ENCODE measurements at regions of chr4 and their contacts with region 1.

Region 1: GRCh38 chr4:3338321-3338838 is 45.6 kb downstream of the RGS12 start:
- DNase-seq: no peak
- H3K4me3 ChIP-seq: no peak overlapping the region
- H3K27ac ChIP-seq: peak overlapping the region; percentile 19
- H3K4me1 ChIP-seq: peaks cover 53% of the 10 kb centered on the region
- H3K27me3 ChIP-seq: no peaks in the 10 kb centered on the region
- CTCF ChIP-seq: no peak

Region 2: GRCh38 chr4:3322059-3322550 is 16.3 kb before region 1 on chr4:
- CTCF ChIA-PET with region 1: interaction called, 4 read pairs
- POLR2A ChIA-PET with region 1: no interaction called
- intact Hi-C with region 1: loop called (anchors 2 kb)
- DNase-seq: peak; percentile 26
- H3K4me3 ChIP-seq: no peak overlapping the region
- H3K27ac ChIP-seq: no peak overlapping the region
- H3K4me1 ChIP-seq: peaks cover 24% of the 10 kb centered on the region
- H3K27me3 ChIP-seq: no peaks in the 10 kb centered on the region
- CTCF ChIP-seq: no peak

Region 3: DNA sequence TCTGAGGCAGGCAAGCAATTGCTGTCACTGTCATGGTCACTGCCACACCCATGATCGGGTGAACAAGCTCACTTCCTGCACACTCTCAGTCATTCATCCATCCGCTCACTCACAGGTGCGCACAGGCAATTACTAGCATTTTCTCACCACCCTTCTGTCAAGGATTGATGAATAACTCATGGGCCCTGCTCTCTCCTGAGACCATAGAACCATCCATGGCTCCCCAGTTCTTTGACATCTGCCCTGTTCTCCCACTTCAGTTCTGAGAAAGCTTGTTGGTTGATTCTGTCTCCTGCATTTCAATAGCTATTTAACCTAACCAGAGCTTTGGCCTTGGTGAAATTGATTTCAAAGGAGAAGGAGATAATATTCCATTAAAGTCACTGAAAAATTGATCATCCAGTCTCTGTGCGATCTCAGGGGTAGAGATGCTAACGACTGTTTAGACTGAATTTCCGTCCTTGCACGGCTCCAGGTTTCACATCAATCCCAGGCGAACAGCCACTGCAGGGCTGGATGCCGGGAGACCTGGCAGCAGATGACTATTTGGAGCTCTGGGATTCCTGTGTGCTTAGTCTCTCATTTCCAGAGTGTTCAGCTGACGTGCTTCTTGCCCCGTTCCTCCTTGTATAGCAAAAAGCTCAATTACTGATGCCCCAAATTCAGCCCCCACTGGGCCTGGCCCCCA is 391.0 kb after region 1 on chr4:
- CTCF ChIA-PET with region 1: no interaction called
- POLR2A ChIA-PET with region 1: no interaction called
- intact Hi-C with region 1: no loop called
- DNase-seq: no peak
- H3K4me3 ChIP-seq: no peak overlapping the region
- H3K27ac ChIP-seq: no peak overlapping the region
- H3K4me1 ChIP-seq: peaks cover 18% of the 10 kb centered on the region
- H3K27me3 ChIP-seq: no peaks in the 10 kb centered on the region
- CTCF ChIP-seq: no peak

Measured in A673 (cell line).